ENCODE measurements at regions of chr4 and their contacts with region 1.

Region 1: DNA sequence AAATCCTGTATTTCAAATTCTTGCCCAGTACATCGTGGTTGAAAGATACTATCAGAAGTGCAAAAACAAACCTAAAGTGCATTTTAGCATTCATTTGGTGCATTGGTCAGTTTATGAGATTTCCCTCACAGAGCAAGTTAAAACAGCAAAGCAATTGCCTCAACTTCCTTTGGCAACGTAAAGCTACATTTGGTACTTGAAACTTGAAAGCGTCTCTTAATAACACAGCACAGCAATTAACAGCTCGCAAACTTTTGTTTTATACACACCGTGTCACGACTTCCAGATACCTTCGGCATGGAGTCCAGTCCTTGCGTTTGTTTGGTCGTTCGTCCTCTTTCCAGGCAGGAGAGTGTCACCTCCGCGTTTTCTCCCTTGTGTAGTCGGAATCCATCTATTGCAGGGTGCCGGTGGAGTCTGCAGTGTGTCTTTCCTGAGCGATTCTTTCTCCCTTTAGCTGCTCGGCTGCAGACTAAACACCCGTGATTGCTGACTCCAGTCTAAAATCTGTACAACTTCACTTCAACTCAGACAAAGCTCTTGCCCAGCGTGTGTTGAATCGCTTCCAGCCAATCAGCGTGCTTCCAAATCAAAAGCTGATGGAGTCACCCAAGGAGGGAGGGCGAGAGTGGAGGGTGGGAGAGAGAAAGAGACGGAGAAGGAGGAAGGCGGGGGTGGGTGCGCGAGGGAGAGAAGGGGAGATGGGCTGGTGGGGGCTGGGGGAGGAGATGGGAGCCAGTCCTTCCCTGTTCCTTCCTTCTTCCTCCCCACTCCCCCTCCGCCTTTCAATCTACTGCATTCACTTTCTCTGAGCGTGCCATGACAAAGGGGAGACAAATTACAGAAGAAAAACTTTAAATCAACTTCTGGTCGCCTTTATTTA is at the start of gene PCDH18:
- DNase-seq: peak; percentile 97
- H3K4me3 ChIP-seq: peak within 1 kb of the TSS; percentile 62 to 67
- H3K27ac ChIP-seq: peak within 1 kb of the TSS; percentile 90 to 92
- H3K4me1 ChIP-seq: peaks cover 0 to 17% (median 5%) of the 10 kb centered on the region in 4 donors
- H3K27me3 ChIP-seq: no peaks in the 10 kb centered on the region
- CTCF ChIP-seq: no peak

Region 2: DNA sequence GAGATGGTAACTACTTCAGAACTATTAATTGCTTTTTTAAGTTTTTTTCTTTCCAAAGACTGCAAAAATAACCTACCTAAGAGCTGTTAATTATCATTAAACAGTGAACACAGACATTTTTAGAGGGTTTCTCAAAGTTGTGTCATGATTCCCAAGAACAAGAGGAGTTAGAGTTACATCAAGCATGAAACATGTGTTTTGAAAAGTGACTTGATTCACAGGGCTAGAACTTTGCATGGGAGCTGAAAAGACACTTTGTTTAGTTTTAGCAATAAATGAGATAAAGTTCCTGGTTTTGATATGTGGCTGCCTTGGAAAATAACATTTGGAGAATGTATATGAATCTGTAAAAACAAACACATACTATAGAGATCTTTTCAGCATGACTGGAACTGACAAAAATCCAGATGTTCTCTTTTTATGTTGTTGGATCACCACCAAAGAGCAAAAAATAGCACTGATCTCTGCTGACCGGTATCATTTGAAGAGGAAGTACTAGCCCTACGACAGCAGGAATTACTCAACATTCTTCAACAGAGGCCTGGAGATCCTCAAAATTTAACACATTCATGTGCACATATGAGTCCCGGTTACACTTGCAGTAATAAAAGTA is 173.1 kb after region 1 on chr4:
- intact Hi-C with region 1: loop called (anchors 10 kb)
- DNase-seq: peak in 1 of 2 donors; percentile 24
- H3K4me3 ChIP-seq: no peak overlapping the region
- H3K27ac ChIP-seq: peak overlapping the region; percentile 58 to 63
- H3K4me1 ChIP-seq: peaks cover 0 to 32% (median 10%) of the 10 kb centered on the region in 4 donors
- H3K27me3 ChIP-seq: no peaks in the 10 kb centered on the region
- CTCF ChIP-seq: no peak

Region 3: GRCh38 chr4:137861682-137862081 is 329.5 kb after region 1 on chr4:
- intact Hi-C with region 1: loop called (anchors 5 kb)
- DNase-seq: no peak
- H3K4me3 ChIP-seq: no peak overlapping the region
- H3K27ac ChIP-seq: no peak overlapping the region
- H3K4me1 ChIP-seq: no peaks in the 10 kb centered on the region
- H3K27me3 ChIP-seq: no peaks in the 10 kb centered on the region
- CTCF ChIP-seq: peak; percentile 48 to 52